ENCODE measurements at regions of chr19 and their contacts with region 1.

Region 1: GRCh38 chr19:7522072-7522922 is at the start of gene MCOLN1:
- H3K4me3 Mint-ChIP-seq: peak within 1 kb of the TSS; percentile 81
- H3K27ac Mint-ChIP-seq: peak within 1 kb of the TSS; percentile 72
- H3K4me1 Mint-ChIP-seq: peaks cover 49% of the 10 kb centered on the region
- H3K27me3 Mint-ChIP-seq: peaks cover 8% of the 10 kb centered on the region

Region 2: GRCh38 chr19:7394731-7395359 is 127.5 kb before region 1 on chr19:
- intact Hi-C with region 1: loop called (anchors 10 kb)
- H3K4me3 Mint-ChIP-seq: peak overlapping the region; percentile 92
- H3K27ac Mint-ChIP-seq: peak overlapping the region; percentile 88
- H3K4me1 Mint-ChIP-seq: peaks cover 51% of the 10 kb centered on the region
- H3K27me3 Mint-ChIP-seq: no peaks in the 10 kb centered on the region

Region 3: DNA sequence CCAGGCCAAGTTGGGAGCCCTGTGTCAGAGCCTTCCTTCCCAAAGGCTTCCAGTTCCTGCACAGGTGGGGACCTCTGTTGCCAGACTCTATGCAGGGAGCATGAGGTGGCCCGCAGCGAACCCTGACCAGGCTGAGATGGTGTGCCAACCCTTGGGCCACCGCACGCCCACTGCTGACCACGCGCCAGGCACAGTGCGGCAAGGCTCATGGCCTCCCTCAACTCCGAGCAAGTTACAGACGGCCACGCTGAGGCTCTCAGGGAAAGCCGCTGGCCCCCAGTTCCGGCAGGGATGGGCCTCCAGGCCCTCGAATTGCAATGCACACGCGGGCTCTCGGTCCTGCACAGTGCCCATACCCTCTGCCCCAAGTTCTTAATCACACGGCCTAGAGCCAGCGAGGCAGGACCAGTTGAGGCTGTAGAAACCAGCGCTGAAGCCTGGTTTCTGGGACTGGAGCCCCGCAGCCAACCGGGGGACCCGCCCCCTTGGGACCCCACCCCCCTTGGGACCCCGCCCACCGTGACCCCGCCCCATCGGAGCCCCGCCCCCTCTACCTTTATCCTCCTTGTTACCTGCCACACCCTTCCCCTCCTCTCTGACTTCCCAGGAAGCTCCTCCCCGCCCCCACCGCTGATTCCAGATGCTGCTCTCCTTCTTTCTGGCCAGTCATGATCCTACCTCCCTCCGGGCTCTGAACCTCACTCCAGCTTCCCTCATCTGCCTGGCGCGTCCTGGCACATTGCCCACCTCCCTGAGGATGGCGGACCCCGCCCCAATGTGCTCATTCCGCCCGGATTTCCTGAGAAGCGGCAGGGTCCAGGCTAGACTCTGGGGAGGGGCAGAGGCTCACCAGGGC is 39.5 kb before region 1 on chr19:
- intact Hi-C with region 1: loop called (anchors 5 kb)
- H3K4me3 Mint-ChIP-seq: peak overlapping the region; percentile 44
- H3K27ac Mint-ChIP-seq: peak overlapping the region; percentile 52
- H3K4me1 Mint-ChIP-seq: peaks cover 43% of the 10 kb centered on the region
- H3K27me3 Mint-ChIP-seq: peaks cover 9% of the 10 kb centered on the region

Region 4: GRCh38 chr19:7535035-7535992 is 13.0 kb after region 1 on chr19 and contains the start of gene PNPLA6:
- intact Hi-C with region 1: loop called (anchors 1 kb)
- H3K4me3 Mint-ChIP-seq: peak within 1 kb of the TSS; percentile 95
- H3K27ac Mint-ChIP-seq: peak within 1 kb of the TSS; percentile 93
- H3K4me1 Mint-ChIP-seq: peaks cover 65% of the 10 kb centered on the region
- H3K27me3 Mint-ChIP-seq: no peaks in the 10 kb centered on the region

Measured in dendritic cell treated with granulocyte-macrophage colony-stimulating factor and Interleukin-4, amounts not matched to agents 40 ng/mL and 50 ng/mL, for 4 days (primary cell).